ENCODE measurements at regions of chr7 and their contacts with region 1.

Region 1: DNA sequence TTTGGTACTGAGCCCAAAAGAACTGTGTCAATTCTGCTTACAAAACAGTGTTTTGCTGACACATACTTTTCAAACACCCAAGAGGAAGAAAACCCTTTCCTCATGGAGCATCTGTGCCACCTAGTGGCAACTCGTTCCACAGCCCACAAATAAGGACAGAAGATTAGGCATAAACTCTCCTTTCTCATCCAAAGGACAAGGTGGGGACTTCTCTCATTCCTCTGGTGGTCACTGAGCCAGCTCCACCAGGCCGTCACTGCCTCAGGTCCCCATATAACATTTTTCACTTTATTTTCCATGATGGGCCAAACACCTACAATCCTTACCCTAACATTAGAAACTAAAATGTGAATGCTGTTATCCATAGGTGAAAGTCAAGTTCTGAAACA is 76.9 kb downstream of the RNF216 start:
- DNase-seq: peak; percentile 87
- H3K4me3 Mint-ChIP-seq: no peak overlapping the region
- H3K27ac Mint-ChIP-seq: no peak overlapping the region
- H3K4me1 Mint-ChIP-seq: peaks cover 36% of the 10 kb centered on the region
- H3K27me3 Mint-ChIP-seq: no peaks in the 10 kb centered on the region

Region 2: DNA sequence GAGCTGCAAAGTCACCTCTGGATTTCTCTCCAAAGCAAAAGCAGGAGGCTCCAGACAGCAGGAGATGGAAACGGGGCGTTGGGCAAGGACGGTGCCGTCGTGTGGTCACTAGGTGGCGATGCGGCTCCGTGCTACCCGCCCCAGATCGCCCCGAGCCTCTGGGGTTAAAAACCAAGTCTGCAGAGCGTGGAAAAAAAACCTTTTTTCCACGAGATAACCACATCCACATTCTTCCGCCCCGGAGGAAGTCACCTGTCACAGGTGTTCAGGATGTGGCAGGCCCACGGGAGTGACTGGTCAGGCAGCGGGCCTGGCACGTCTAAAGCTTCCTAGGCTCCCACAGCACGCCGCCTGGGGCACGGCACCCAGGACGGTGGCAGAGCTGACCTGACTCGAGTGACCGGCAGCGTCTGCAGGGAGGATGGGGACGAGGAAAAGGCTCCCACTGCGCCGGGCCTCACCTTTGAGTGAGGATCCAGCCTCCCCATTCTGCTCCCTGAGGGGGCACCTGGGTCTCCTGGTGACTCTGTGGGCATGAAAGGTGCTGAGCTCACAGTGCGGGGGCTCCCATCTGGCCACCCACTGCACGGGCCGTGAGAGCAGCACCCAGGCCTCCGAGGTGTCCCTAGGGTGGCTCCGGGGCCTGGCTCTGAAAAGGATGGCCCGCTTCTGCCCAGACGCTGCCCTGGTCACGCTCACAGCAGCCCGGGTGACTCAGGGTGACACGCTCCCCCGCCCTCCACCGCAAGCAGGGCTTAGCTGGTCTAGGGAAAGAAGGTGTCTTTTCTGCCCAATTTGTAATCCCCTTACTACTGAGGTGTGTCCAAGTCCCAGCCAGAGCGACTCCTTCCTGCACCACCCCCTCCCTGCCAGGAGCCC is 209.6 kb before region 1 on chr7:
- CTCF ChIA-PET with region 1: interaction called, 36 read pairs
- DNase-seq: peak; percentile 87
- H3K4me3 Mint-ChIP-seq: no peak overlapping the region
- H3K27ac Mint-ChIP-seq: peak overlapping the region; percentile 33
- H3K4me1 Mint-ChIP-seq: peaks cover 40% of the 10 kb centered on the region
- H3K27me3 Mint-ChIP-seq: no peaks in the 10 kb centered on the region

Region 3: DNA sequence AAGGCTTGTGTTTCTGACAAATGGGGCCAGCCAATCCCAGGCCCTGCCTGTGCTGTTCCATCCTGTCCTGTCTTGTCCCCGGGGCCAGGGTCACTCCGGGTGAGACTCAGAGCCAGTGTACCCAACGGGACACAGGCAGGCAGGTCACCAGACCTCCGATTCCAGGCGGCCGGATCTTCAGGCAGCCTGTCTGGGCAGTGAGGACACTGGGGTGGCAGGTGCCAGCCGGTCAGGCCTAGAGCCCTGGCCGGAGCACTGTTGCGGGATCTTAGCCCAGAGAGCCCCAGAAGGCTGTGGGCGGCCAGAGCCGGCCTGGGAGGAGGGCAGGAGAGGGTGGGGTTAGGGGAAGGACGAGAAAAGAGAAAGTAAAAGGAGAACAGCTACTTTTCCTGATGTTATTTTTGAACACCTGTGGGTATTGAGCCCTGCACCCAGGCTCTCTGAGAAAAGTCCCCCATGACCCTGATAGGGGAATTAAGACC is 146.6 kb before region 1 on chr7:
- CTCF ChIA-PET with region 1: interaction called, 26 read pairs
- DNase-seq: peak; percentile 57
- H3K4me3 Mint-ChIP-seq: peak overlapping the region; percentile 83
- H3K27ac Mint-ChIP-seq: peak overlapping the region; percentile 91
- H3K4me1 Mint-ChIP-seq: peaks cover 62% of the 10 kb centered on the region
- H3K27me3 Mint-ChIP-seq: peaks cover 54% of the 10 kb centered on the region

Region 4: GRCh38 chr7:5567790-5568189 is 136.7 kb before region 1 on chr7:
- CTCF ChIA-PET with region 1: interaction called, 10 read pairs
- DNase-seq: no peak
- H3K4me3 Mint-ChIP-seq: no peak overlapping the region
- H3K27ac Mint-ChIP-seq: no peak overlapping the region
- H3K4me1 Mint-ChIP-seq: peaks cover 37% of the 10 kb centered on the region
- H3K27me3 Mint-ChIP-seq: peaks cover 43% of the 10 kb centered on the region

Region 5: DNA sequence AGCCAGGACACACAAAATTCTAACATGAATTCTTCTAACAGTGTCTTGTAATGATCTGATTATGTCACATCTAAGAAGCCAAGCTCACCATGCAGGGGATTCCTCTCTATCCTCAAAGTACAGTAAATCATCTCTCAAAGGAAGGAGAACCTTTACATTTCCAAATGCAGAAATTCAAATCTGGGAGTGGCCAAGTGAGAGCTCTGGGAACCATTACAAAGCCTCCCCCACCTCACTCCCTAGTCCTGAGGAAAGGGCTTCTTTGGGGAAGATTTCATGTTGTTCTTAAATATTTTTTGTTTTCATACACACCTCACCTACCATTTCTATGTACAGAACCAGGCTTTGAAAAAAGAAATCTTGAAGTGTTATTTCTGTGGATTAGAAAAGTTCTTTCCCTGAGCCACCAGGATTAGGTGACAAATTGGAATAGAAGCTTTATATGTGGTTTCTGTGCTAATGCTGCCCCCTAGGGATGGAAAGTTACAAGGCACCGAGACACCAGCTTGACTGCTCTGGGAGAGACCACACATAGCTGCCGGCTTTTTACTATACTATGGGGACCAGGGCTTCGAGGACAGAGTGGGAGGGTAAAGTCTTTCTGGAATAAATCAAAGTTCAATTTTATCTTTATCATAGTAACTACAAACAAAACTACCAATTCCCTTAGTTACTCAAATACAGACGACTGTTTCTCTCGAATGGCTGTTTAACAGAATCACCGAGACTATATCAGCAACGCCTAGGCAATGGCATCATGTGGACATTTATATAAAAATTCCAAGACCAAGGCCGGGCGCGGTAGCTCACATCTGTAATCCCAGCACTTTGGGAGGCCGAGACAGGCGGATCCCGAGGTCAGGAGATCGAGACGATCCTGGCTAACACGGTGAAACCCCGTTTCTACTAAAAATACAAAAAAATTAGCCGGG is 39.2 kb before region 1 on chr7:
- CTCF ChIA-PET with region 1: interaction called, 51 read pairs
- DNase-seq: peak; percentile 78
- H3K4me3 Mint-ChIP-seq: no peak overlapping the region
- H3K27ac Mint-ChIP-seq: no peak overlapping the region
- H3K4me1 Mint-ChIP-seq: peaks cover 19% of the 10 kb centered on the region
- H3K27me3 Mint-ChIP-seq: no peaks in the 10 kb centered on the region

Region 6: GRCh38 chr7:5677538-5678294 is 26.8 kb before region 1 on chr7:
- CTCF ChIA-PET with region 1: interaction called, 63 read pairs
- DNase-seq: peak; percentile 67
- H3K4me3 Mint-ChIP-seq: no peak overlapping the region
- H3K27ac Mint-ChIP-seq: no peak overlapping the region
- H3K4me1 Mint-ChIP-seq: peaks cover 27% of the 10 kb centered on the region
- H3K27me3 Mint-ChIP-seq: no peaks in the 10 kb centered on the region

Region 7: DNA sequence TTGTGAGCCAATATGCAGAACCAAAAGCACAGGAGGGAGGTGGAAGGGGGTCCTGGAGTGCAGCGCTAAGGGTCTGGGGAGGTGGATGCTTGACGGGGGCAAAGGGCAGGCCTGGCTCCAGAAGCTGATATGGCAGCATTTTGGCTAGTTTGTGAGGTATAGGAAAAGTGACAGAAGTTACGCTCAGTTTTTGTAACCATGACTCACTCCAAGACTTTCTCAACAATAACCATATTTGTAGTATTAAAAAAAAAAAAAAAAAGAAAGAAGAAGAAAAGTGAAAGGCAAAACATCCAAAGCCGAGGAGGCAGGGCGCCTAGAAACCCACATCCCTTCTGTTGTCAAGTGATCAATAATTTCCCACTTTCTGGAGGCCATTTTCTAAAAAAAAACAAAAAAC is 15.4 kb before region 1 on chr7:
- CTCF ChIA-PET with region 1: interaction called, 19 read pairs
- DNase-seq: peak; percentile 78
- H3K4me3 Mint-ChIP-seq: peak overlapping the region; percentile 57
- H3K27ac Mint-ChIP-seq: peak overlapping the region; percentile 96
- H3K4me1 Mint-ChIP-seq: peaks cover 93% of the 10 kb centered on the region
- H3K27me3 Mint-ChIP-seq: no peaks in the 10 kb centered on the region

Measured in activated naive CD4-positive, alpha-beta T cell treated with anti-CD3 and anti-CD28 coated beads, Interleukin-2, amount 10 ng/mL, durations not matched to agents 7 days and 5 days (primary cell).